SK-N-SH (cell line): ENCODE measurements at regions of chr13 and their contacts with region 1.

Region 1: DNA sequence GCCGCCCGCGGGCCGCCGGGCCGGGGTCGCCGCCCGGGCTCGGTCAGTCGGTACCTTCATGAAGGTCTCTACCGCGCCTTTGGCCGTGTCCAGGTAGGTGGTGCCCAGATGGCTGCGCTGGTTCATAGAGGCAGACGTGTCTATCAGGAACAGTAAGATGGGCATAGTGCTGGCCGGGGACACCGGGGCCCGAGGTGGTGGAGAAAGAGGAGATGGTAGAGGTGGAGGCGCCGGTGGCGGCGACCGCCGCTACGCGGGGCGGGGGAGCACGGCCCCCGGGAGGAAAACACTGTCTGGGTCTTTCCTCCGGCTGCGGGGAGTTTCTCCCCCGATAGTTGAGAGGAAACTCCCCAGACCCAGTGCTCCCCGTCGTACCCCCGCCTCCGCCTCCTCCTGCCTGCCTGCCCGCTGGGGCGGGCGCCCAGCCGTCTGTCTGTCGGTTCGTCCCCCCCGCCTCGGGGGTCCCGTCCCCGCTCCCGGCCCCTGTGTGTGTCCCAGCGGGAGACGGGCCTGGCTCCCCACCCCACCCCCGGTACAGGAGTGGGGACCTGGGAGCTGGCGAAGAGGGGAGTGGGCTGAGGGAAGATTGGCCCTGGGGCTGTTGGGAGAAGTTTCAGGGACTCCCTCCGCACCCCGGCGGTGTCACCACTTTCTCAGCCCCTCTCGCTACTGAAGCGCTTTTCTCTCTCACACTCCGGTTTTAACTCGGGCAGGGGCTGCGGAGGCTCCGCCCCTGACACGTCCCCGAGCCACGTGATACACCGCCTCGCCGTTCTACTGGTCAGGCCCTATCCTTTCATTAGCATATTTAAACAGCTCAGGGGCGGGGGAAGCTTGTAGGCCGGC is at the start of gene INTS6:
- DNase-seq: no peak
- H3K4me3 ChIP-seq: peak within 1 kb of the TSS; percentile 79 to 90
- H3K27ac ChIP-seq: peak within 1 kb of the TSS; percentile 90 to 97
- H3K4me1 ChIP-seq: peaks cover 5 to 7% of the 10 kb centered on the region in 2 experiments; a peak in 3 of 4 replicates
- H3K27me3 ChIP-seq: no peaks in the 10 kb centered on the region
- CTCF ChIP-seq: no peak
- EP300 ChIP-seq: peak in 1 of 2 experiments; percentile 7; a peak in 1 of 4 replicates
- RAD21 ChIP-seq: peak; percentile 27; the same call in 1 of the 2 replicates
- polyA plus RNA-seq, gene INTS6: 7.7 and 9.1 TPM in 2 replicates

Region 2: GRCh38 chr13:51269039-51269438 is 183.5 kb before region 1 on chr13:
- CTCF ChIA-PET with region 1: no interaction called
- POLR2A ChIA-PET with region 1: no interaction called
- DNase-seq: no peak
- H3K4me3 ChIP-seq: no peak overlapping the region
- H3K27ac ChIP-seq: peak overlapping the region in 1 of 2 experiments; percentile 55; a peak in 1 of 4 replicates
- H3K4me1 ChIP-seq: peaks cover 0 to 5% of the 10 kb centered on the region in 2 experiments; a peak in 1 of 4 replicates
- H3K27me3 ChIP-seq: no peaks in the 10 kb centered on the region
- CTCF ChIP-seq: no peak
- EP300 ChIP-seq: peak in 1 of 2 experiments; percentile 45; a peak in 1 of 4 replicates
- RAD21 ChIP-seq: no peak

Region 3: DNA sequence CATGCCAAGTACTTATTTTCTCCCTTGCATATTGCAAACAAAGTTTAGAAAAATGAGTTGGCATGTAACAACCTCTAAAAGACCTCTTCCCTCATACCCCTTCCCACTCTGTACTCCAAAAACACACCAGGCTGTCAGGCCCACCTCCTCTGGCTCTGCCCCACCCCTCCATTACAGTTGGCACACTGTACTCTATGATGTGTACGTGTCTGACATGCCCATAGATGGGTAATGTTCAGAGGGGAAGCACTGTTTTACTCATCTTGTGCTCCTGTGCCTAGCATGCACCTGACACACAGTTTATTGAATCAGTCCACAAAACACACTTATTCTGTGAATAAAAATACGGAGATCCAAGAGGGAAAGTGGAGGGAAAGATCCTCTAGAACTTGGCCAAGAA is 67.5 kb before region 1 on chr13:
- CTCF ChIA-PET with region 1: no interaction called
- POLR2A ChIA-PET with region 1: no interaction called
- DNase-seq: no peak
- H3K4me3 ChIP-seq: no peak overlapping the region
- H3K27ac ChIP-seq: no peak overlapping the region
- H3K4me1 ChIP-seq: no peaks in the 10 kb centered on the region; a peak in 2 of 4 replicates
- H3K27me3 ChIP-seq: no peaks in the 10 kb centered on the region
- CTCF ChIP-seq: no peak
- EP300 ChIP-seq: no peak
- RAD21 ChIP-seq: no peak

Region 4: GRCh38 chr13:51583875-51584730 is 131.5 kb after region 1 on chr13 and contains the start of gene WDFY2:
- CTCF ChIA-PET with region 1: no interaction called
- POLR2A ChIA-PET with region 1: interaction called, 31 read pairs
- DNase-seq: peak; percentile 96
- H3K4me3 ChIP-seq: peak within 1 kb of the TSS; percentile 83 to 98
- H3K27ac ChIP-seq: peak within 1 kb of the TSS; percentile 89 to 97
- H3K4me1 ChIP-seq: peaks cover 10 to 18% of the 10 kb centered on the region in 2 experiments; a peak in 3 of 4 replicates
- H3K27me3 ChIP-seq: no peaks in the 10 kb centered on the region
- CTCF ChIP-seq: no peak
- EP300 ChIP-seq: peak in 1 of 2 experiments; percentile 50; a peak in 1 of 4 replicates
- RAD21 ChIP-seq: no peak; the same call in 1 of the 2 replicates
- polyA plus RNA-seq, gene WDFY2: 4.1 and 5.4 TPM in 2 replicates

Region 5: DNA sequence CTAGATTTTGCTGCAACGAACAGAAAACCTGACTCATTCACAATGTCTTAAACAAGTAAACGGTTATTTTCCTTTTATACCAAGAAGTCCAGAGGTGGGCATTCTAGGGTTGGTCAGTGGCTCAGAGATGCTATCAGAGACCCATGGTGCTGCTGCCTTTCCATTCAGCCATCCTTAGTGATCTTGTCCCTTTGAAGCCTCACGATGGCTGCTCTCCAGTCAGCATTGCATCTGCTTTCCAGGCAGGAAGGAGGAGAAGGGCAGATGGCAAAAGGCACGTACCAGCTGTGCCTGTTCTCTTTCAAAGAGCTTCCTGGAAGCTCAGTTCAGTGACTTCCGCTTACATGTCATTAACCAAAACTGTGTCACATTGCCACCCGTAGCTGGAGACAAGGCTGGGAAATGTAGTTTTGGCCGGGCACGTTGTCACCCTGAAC is 161.8 kb after region 1 on chr13:
- CTCF ChIA-PET with region 1: no interaction called
- POLR2A ChIA-PET with region 1: interaction called, 19 read pairs
- DNase-seq: peak; percentile 64
- H3K4me3 ChIP-seq: no peak overlapping the region; a peak in 1 of 4 replicates
- H3K27ac ChIP-seq: peak overlapping the region; percentile 29 to 96; a peak in 3 of 4 replicates
- H3K4me1 ChIP-seq: peaks cover 29 to 40% of the 10 kb centered on the region in 2 experiments
- H3K27me3 ChIP-seq: no peaks in the 10 kb centered on the region
- CTCF ChIP-seq: no peak
- EP300 ChIP-seq: peak in 1 of 2 experiments; percentile 72; a peak in 1 of 4 replicates
- RAD21 ChIP-seq: no peak

Region 6: DNA sequence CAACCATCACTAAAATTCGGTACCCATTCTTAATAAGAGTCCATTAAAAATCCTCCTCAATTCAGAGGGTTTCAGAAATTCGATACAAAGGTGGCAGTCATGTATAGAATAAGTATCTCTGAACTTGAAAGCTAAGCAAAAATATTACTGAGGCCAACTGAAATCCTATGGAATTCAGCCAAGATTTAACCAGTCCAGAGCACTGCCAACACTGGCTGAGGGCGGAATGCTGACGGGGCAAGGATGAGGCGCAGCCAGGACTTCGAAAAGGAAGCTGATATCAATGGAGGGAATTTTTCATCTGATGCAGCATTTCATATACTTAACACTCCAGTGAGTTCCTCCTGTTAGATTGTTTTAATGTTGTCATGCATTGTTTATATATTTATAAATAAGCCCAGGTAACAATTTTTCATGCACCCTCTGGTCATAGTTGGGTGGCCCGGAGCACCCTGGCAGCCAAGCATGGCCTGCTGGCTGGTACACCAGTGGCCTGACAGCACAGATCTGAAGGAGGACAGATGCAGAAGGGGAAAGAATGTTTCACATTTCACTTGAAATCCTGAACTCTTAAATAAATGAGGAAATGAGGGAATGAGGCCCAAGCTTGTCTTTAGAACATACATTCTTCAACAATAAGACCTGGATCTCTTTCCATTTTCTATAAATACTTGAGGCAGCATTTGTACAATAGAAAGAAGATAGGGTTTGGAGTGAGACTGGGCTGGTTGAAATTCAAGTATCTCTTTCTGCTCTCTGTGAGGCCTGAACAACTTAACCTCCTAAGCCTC is 173.2 kb after region 1 on chr13:
- CTCF ChIA-PET with region 1: no interaction called
- POLR2A ChIA-PET with region 1: interaction called, 15 read pairs
- DNase-seq: no peak
- H3K4me3 ChIP-seq: no peak overlapping the region
- H3K27ac ChIP-seq: peak overlapping the region in 1 of 2 experiments; percentile 61; a peak in 2 of 4 replicates
- H3K4me1 ChIP-seq: peaks cover 47 to 73% of the 10 kb centered on the region in 2 experiments; a peak in 3 of 4 replicates
- H3K27me3 ChIP-seq: no peaks in the 10 kb centered on the region
- CTCF ChIP-seq: no peak
- EP300 ChIP-seq: no peak
- RAD21 ChIP-seq: no peak